Activated T-helper 1 cell treated with anti-CD3 and anti-CD28 coated beads, Interleukin-12 subunit alpha, Interleukin-12 subunit beta, Interleukin-2, Interleukin-4 antibody, amounts not matched to agents 30 ng/mL and 10 ng/mL and 1 ng/mL, durations not matched to agents 14 hours and 24 hours and 36 hours (primary cell): ENCODE measurements at regions of chr15 and their contacts with region 1.

Region 1: GRCh38 chr15:97909291-97909891 is 51.1 kb upstream of the ARRDC4 start:
- DNase-seq: peak; percentile 26
- H3K4me3 Mint-ChIP-seq: no peak overlapping the region
- H3K27ac Mint-ChIP-seq: no peak overlapping the region
- H3K4me1 Mint-ChIP-seq: no peaks in the 10 kb centered on the region
- H3K27me3 Mint-ChIP-seq: peaks cover 8% of the 10 kb centered on the region

Region 2: GRCh38 chr15:97456521-97457202 is 452.7 kb before region 1 on chr15:
- intact Hi-C with region 1: no loop called
- DNase-seq: no peak
- H3K4me3 Mint-ChIP-seq: no peak overlapping the region
- H3K27ac Mint-ChIP-seq: no peak overlapping the region
- H3K4me1 Mint-ChIP-seq: no peaks in the 10 kb centered on the region
- H3K27me3 Mint-ChIP-seq: no peaks in the 10 kb centered on the region

Region 3: DNA sequence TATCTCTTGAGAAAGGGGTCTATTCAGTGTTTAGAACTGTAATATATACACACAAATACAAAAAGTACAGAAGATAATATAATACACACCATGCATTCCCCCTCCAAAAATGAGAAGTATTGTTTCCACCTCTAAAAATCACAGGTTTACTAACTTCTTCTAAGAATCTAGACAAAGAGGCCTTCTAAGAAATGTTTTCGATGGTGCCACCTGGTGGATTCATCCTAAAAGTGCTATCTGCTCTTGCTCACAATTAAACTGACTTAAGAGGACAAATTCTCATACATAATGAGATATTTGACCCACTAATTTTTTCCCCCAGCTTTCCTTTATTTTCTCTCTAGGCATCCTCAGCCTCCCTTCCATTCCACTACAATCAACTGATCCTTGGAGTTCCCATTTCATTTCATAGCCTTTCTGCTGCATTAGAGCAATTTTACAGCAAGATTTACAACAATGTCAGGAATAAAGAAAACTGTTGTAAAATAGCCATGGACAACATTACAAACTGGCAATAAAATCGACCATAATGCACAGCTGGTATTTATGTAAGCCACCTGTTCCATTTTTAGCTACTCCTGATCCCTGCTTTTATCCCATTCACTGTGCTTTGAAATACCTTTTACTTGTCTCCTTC is 175.7 kb after region 1 on chr15:
- intact Hi-C with region 1: loop called (anchors 1 kb)
- DNase-seq: peak; percentile 2
- H3K4me3 Mint-ChIP-seq: no peak overlapping the region
- H3K27ac Mint-ChIP-seq: no peak overlapping the region
- H3K4me1 Mint-ChIP-seq: no peaks in the 10 kb centered on the region
- H3K27me3 Mint-ChIP-seq: no peaks in the 10 kb centered on the region

Region 4: DNA sequence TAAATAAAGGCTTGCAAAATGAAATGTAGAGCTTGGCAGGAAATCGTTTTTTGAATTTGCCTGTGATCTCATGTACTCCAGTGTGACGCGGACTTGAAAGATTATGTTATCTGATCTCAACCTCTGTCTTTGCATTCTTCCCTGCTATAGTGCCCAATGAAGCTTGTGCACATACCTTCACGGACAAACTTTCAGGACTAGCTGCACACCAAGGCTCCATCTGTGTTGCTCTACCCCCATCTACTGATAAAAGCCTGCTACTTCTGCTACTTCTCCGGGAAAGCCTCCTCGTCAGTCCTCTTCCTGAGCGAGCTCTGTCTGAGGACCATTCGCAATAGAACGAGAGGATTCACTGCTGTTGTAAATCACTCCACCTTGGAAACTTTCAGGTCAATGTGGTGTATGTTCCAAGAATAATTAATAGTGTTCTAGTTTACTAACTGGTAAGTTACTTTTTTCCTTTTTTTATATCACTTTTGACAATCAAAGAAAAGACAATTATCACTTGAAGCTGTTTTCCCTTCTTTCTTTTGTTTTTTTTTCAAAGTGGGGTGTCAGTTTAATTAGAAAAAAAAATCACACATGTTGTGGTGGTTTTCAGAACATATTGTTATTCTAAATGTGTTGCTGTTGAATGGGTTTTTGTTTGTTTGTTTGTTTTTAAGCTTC is 268.7 kb after region 1 on chr15:
- intact Hi-C with region 1: loop called (anchors 1 kb)
- DNase-seq: peak; percentile 34
- H3K4me3 Mint-ChIP-seq: no peak overlapping the region
- H3K27ac Mint-ChIP-seq: no peak overlapping the region
- H3K4me1 Mint-ChIP-seq: peaks cover 4% of the 10 kb centered on the region
- H3K27me3 Mint-ChIP-seq: peaks cover 14% of the 10 kb centered on the region

Region 5: GRCh38 chr15:98292442-98293240 is 383.2 kb after region 1 on chr15:
- intact Hi-C with region 1: loop called (anchors 2 kb)
- DNase-seq: peak; percentile 2
- H3K4me3 Mint-ChIP-seq: no peak overlapping the region
- H3K27ac Mint-ChIP-seq: no peak overlapping the region
- H3K4me1 Mint-ChIP-seq: no peaks in the 10 kb centered on the region
- H3K27me3 Mint-ChIP-seq: peaks cover 20% of the 10 kb centered on the region

Region 6: DNA sequence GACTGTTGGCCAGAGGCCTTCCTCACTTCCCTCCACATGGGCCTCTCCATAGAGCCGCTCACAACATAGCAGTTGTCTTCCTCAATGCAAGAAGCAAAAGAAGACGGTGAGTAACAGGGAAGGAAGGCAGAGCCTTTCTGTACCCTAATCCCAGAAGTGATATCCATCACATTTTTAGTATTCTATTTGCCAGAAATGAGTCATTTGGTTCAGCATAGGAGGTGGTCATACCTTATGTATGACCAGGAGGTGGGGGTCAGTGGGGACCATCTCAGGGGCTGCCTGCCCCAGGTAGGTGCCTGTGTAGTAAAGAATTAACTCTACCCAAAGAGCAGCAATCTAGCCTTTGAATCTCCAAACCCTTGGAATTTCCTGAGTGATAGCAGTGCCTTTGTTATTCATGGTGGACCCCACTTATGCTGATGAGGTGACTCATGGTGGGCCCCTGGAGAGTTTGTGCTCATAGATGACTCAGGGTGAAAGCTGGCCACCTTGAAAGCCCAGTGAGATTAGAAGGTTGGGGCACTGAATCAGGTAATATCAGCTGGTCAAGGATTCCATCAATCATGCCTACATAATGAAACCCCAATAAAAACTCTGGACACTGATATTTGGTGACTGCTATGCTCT is 415.1 kb after region 1 on chr15:
- intact Hi-C with region 1: no loop called
- DNase-seq: no peak
- H3K4me3 Mint-ChIP-seq: no peak overlapping the region
- H3K27ac Mint-ChIP-seq: no peak overlapping the region
- H3K4me1 Mint-ChIP-seq: no peaks in the 10 kb centered on the region
- H3K27me3 Mint-ChIP-seq: no peaks in the 10 kb centered on the region

Region 7: DNA sequence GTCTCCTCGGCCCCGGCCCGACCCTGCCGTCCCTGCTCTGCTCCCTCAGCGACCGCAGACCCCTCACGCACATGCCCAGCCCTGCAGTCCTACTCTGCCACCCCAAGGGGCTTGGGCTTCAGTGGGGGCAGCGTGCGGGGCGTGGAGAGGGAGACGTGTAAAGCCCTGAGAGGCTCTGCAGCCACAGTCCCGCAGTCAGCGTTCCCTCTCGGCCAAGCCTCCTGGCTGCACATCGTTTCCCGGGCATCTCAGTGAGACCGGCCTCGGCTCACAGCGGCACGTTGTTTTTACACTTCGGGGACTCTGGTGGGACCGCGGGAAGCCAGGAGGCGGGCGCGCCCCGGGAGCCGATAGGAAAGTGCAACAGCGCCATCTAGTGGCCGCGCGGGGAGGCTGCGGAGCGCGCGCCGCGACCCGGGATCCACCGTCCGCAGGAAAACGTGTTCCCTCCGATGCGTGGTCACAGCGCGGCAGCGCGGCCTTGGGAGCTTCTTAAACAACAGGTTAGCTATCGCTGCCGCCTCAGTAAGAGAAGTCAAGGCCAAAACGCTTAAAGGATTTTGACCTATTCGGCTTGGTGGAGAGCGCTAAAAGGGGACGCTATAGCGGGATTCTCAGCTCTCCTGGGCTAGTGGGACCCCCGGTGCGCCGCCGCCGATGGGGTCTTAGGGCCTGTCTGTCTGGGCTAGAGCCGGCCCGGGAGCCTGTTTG is 512.2 kb after region 1 on chr15:
- intact Hi-C with region 1: loop called (anchors 5 kb)
- DNase-seq: peak; percentile 48
- H3K4me3 Mint-ChIP-seq: no peak overlapping the region
- H3K27ac Mint-ChIP-seq: no peak overlapping the region
- H3K4me1 Mint-ChIP-seq: no peaks in the 10 kb centered on the region
- H3K27me3 Mint-ChIP-seq: peaks cover 35% of the 10 kb centered on the region